T-cell (primary cell): ENCODE measurements at regions of chr4 and their contacts with region 1.

Region 1: DNA sequence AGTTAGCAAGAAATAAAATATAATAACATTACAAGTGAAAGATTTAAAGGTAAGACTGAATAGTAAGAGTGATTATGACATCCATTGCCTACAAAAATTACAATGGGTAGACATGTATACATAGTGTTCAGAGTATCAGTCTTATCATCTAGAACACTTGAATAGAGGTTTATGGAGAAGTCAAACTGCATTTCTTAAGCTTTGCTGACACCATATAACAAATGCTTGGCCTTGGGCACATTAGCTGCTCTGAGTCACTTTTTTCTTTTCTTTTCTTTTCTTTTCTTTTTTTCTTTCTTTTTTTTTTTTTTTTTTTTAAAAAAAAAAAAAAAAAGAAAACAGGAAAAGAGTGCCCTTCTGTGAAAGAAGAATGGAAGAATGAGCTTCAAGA is 220.0 kb downstream of the SPCS3 start:
- DNase-seq: no peak
- ATAC-seq: no peak
- H3K4me3 ChIP-seq: no peak overlapping the region
- H3K4me3 Mint-ChIP-seq: no peak overlapping the region
- H3K27ac ChIP-seq: no peak overlapping the region
- H3K27ac Mint-ChIP-seq: no peak overlapping the region
- H3K4me1 ChIP-seq: no peaks in the 10 kb centered on the region
- H3K4me1 Mint-ChIP-seq: no peaks in the 10 kb centered on the region
- H3K27me3 ChIP-seq: no peaks in the 10 kb centered on the region
- H3K27me3 Mint-ChIP-seq: no peaks in the 10 kb centered on the region

Region 2: DNA sequence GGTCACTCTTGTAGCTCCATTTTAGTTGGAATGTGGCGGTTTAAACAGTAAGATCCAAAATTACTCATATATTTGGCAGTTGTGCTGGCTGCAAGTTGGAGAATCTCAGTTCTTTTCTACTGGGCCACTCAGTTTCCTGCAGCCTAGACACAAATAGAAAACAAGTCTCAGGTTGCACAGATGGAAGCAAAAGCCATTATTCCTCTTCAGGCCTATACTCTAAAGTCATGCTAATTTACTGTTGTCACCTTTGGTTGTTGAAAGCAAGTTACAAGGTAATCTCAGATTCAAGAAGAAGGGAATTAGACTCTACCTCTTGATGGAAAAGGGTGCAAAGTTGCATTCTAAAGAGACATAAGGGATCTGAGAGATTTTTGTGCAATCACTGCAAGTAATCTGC is 1276.2 kb before region 1 on chr4:
- CTCF ChIA-PET with region 1: no interaction called
- POLR2A ChIA-PET with region 1: interaction called in 1 of 2 experiments, 20 read pairs
- DNase-seq: no peak
- ATAC-seq: no peak
- H3K4me3 ChIP-seq: no peak overlapping the region
- H3K4me3 Mint-ChIP-seq: no peak overlapping the region
- H3K27ac ChIP-seq: no peak overlapping the region
- H3K27ac Mint-ChIP-seq: no peak overlapping the region
- H3K4me1 ChIP-seq: no peaks in the 10 kb centered on the region
- H3K4me1 Mint-ChIP-seq: no peaks in the 10 kb centered on the region
- H3K27me3 ChIP-seq: no peaks in the 10 kb centered on the region
- H3K27me3 Mint-ChIP-seq: no peaks in the 10 kb centered on the region